ENCODE measurements at regions of chr19 and their contacts with region 1.

Region 1: GRCh38 chr19:17859533-17860330 is at the start of gene RPL18A:
- DNase-seq: peak; percentile 100
- H3K4me3 Mint-ChIP-seq: peak within 1 kb of the TSS; percentile 98
- H3K27ac Mint-ChIP-seq: peak within 1 kb of the TSS; percentile 99
- H3K4me1 Mint-ChIP-seq: peaks cover 18% of the 10 kb centered on the region
- H3K27me3 Mint-ChIP-seq: no peaks in the 10 kb centered on the region
- CTCF ChIP-seq: peak; percentile 69
- total RNA-seq, gene RPL18A: 3,250 and 3,372 TPM in 2 replicates

Region 2: GRCh38 chr19:17470068-17470841 is 389.5 kb before region 1 on chr19 and contains the start of gene SLC27A1:
- CTCF ChIA-PET with region 1: interaction called, 3 read pairs
- POLR2A ChIA-PET with region 1: interaction called, 3 read pairs
- intact Hi-C with region 1: loop called (anchors 10 kb)
- DNase-seq: peak; percentile 99
- H3K4me3 Mint-ChIP-seq: peak within 1 kb of the TSS; percentile 91
- H3K27ac Mint-ChIP-seq: peak within 1 kb of the TSS; percentile 97
- H3K4me1 Mint-ChIP-seq: peaks cover 41% of the 10 kb centered on the region
- H3K27me3 Mint-ChIP-seq: no peaks in the 10 kb centered on the region
- CTCF ChIP-seq: no peak
- total RNA-seq, gene SLC27A1: 3.4 and 5.0 TPM in 2 replicates

Region 3: GRCh38 chr19:17511724-17512573 is 347.8 kb before region 1 on chr19:
- CTCF ChIA-PET with region 1: interaction called, 7 read pairs
- POLR2A ChIA-PET with region 1: interaction called, 14 read pairs
- intact Hi-C with region 1: no loop called
- DNase-seq: peak; percentile 79
- H3K4me3 Mint-ChIP-seq: peak overlapping the region; percentile 98
- H3K27ac Mint-ChIP-seq: peak overlapping the region; percentile 99
- H3K4me1 Mint-ChIP-seq: peaks cover 22% of the 10 kb centered on the region
- H3K27me3 Mint-ChIP-seq: no peaks in the 10 kb centered on the region
- CTCF ChIP-seq: no peak

Region 4: DNA sequence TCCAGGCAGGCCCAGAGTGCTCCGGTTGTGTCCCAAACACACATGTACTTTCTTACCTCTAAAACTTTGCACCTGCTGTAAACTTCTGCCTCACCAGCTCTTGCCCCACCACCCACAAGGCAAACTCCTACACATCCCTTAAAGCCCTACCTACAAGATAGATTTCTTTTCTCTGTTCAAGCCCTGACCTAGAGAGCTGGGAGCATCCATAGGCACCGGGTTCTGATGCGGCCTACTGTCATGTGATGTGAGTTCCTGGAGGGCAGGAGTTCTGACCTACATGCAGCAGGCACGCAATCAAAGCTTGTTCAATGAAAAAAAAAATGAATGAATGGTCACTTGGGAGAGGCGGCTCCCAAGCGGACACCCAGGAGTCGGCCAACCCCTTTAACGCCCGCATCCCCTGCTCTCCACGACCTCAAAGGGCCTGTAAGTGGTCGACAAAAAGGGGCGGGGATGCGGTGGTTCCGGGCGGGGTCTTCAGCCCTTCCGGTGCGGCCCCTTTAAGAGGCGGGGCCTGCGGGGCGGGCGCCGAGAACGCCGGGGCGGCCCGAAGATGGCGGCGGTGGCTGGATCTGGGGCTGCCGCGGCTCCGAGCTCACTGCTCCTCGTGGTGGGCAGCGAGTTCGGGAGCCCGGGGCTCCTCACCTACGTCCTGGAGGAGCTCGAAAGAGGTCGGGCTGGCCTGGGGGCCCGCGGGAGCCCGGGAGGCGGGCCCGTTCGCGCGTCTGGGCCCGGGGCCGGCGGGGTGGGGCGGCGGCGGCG is 140.6 kb before region 1 on chr19 and contains the start of gene MAP1S:
- CTCF ChIA-PET with region 1: no interaction called
- POLR2A ChIA-PET with region 1: no interaction called
- intact Hi-C with region 1: no loop called
- DNase-seq: peak; percentile 48
- H3K4me3 Mint-ChIP-seq: peak within 1 kb of the TSS; percentile 78
- H3K27ac Mint-ChIP-seq: peak within 1 kb of the TSS; percentile 62
- H3K4me1 Mint-ChIP-seq: peaks cover 21% of the 10 kb centered on the region
- H3K27me3 Mint-ChIP-seq: no peaks in the 10 kb centered on the region
- CTCF ChIP-seq: no peak
- total RNA-seq, gene MAP1S: 47.1 and 58.3 TPM in 2 replicates

Region 5: GRCh38 chr19:17784201-17785008 is 75.3 kb before region 1 on chr19:
- CTCF ChIA-PET with region 1: interaction called, 12 read pairs
- POLR2A ChIA-PET with region 1: no interaction called
- intact Hi-C with region 1: loop called (anchors 1 kb)
- DNase-seq: peak; percentile 80
- H3K4me3 Mint-ChIP-seq: no peak overlapping the region
- H3K27ac Mint-ChIP-seq: no peak overlapping the region
- H3K4me1 Mint-ChIP-seq: peaks cover 5% of the 10 kb centered on the region
- H3K27me3 Mint-ChIP-seq: no peaks in the 10 kb centered on the region
- CTCF ChIP-seq: peak; percentile 79

Region 6: DNA sequence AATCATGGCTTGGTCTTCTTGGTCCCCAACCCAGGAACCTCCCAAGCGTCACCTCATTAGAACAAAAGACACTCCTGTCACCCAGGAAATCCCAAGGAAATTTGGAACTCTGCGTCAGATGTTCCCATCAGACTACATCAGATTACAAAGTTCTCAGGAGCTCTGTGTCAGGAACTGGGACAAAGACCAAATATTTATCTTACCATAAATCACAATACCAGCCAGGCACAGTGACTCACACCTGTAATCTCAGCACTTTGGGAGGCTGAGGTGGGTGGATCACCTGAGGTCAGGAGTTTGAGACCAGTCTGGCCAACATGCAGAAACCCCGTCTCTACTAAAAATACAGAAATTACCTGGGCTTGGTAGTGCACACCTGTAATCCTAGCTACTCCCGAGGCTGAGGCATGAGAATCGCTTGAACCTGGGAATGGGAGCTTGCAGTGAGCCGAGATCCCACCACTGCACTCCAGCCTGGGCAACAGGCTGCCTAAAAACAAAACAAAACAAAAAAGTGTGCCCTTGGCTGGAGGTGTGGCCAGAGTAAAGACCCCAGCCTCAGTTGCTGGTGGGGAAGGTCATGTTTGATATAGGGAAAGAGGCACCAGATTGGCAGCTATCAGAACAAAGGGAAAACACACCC is 56.3 kb after region 1 on chr19:
- CTCF ChIA-PET with region 1: no interaction called
- POLR2A ChIA-PET with region 1: interaction called, 12 read pairs
- intact Hi-C with region 1: no loop called
- DNase-seq: peak; percentile 80
- H3K4me3 Mint-ChIP-seq: no peak overlapping the region
- H3K27ac Mint-ChIP-seq: no peak overlapping the region
- H3K4me1 Mint-ChIP-seq: no peaks in the 10 kb centered on the region
- H3K27me3 Mint-ChIP-seq: no peaks in the 10 kb centered on the region
- CTCF ChIP-seq: no peak

Region 7: GRCh38 chr19:17938092-17938845 is 78.5 kb after region 1 on chr19:
- CTCF ChIA-PET with region 1: interaction called, 58 read pairs
- POLR2A ChIA-PET with region 1: interaction called, 223 read pairs
- intact Hi-C with region 1: no loop called
- DNase-seq: peak; percentile 90
- H3K4me3 Mint-ChIP-seq: no peak overlapping the region
- H3K27ac Mint-ChIP-seq: no peak overlapping the region
- H3K4me1 Mint-ChIP-seq: peaks cover 6% of the 10 kb centered on the region
- H3K27me3 Mint-ChIP-seq: no peaks in the 10 kb centered on the region
- CTCF ChIP-seq: peak; percentile 86